ENCODE measurements at regions of chr7 and their contacts with region 1.

Region 1: DNA sequence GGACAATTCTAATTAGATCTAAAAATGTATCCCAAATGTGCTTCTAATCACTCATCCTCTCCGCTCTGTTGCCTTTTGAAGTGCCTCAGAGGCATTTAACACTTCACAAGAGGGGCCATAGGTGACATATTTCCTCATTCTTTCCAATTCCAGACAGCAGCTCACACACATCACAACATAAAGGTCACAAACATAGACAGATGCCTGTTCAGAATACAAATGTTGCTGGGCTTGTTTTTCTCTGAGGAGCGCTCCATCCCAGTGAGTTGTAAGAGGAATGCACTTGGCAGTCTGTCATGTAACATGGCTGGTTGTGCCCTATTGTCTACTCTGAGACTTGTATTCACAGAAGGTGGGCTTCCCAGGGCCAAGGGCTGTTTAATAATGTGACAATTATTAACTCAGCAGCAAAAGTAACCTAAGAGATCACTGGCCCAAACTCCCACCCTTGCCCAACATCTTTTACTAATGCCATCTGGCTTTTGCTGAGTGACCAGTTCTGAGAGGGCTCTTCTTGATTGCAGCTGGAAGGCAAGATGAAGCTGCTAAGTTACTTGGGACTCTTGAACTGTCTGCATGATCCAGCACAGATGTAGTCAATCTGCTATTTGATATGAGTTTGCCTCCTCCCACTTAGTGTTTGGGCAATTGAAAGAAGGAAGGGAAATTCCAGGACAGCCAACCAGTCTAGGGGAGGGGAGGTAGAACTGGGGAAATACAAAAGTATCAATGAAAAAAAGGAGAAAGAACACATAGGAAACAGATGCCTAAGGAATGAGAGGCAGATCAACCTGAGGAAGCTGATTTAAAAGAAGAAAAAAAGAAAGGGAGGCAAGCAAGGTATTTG is 13.6 kb downstream of the PON2 start:
- DNase-seq: no peak
- H3K4me3 ChIP-seq: no peak overlapping the region
- H3K27ac ChIP-seq: no peak overlapping the region
- H3K4me1 ChIP-seq: peaks cover 0 to 6% (median 0%) of the 10 kb centered on the region in 3 donors
- H3K27me3 ChIP-seq: no peaks in the 10 kb centered on the region
- CTCF ChIP-seq: no peak
- POLR2A ChIP-seq: no peak

Region 2: GRCh38 chr7:95213809-95214492 is 207.3 kb before region 1 on chr7:
- intact Hi-C with region 1: no loop called
- DNase-seq: no peak
- H3K4me3 ChIP-seq: no peak overlapping the region
- H3K27ac ChIP-seq: no peak overlapping the region
- H3K4me1 ChIP-seq: no peaks in the 10 kb centered on the region
- H3K27me3 ChIP-seq: no peaks in the 10 kb centered on the region
- CTCF ChIP-seq: no peak
- POLR2A ChIP-seq: no peak

Region 3: DNA sequence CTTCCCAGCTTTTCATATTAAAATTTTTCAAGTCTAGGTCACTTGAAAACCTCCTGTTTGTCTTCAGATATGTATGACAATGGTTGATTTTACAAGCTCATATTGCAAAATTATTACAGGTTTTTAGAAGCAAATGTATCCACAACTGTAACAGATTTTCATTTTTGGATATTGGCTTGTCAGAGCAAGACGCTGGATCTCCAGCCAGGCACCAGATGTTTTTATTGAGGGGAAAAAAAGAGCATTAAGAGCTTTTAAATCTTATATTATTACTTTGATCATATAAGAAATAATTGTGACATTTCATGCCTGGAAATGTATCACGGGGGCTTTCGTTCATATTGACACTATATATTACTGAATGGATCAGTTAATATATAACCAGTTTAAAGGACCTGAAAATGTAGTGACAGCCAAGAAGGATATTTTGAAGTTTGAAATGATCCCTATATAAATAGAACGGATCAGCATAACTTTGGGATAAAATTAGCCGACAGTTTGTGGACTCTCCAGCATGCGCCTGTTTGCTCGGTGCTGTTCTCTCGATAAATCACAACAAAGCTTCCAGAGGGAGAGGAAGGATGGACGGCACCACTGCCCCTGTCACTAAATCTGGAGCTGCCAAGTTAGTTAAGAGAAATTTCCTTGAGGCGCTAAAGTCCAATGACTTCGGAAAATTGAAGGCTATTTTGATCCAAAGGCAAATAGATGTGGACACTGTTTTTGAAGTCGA is 64.3 kb after region 1 on chr7 and contains the start of gene ASB4:
- intact Hi-C with region 1: loop called (anchors 5 kb)
- DNase-seq: no peak
- H3K4me3 ChIP-seq: no peak within 1 kb of the TSS
- H3K27ac ChIP-seq: no peak within 1 kb of the TSS
- H3K4me1 ChIP-seq: no peaks in the 10 kb centered on the region
- H3K27me3 ChIP-seq: peaks cover 0 to 20% (median 0%) of the 10 kb centered on the region in 4 donors
- CTCF ChIP-seq: no peak
- POLR2A ChIP-seq: no peak
- total RNA-seq, gene ASB4: 0.19 TPM in 1 of 4 donors, not detected in the others